HEK293 (cell line): ENCODE measurements at regions of chr1 and their contacts with region 1.

Region 1: DNA sequence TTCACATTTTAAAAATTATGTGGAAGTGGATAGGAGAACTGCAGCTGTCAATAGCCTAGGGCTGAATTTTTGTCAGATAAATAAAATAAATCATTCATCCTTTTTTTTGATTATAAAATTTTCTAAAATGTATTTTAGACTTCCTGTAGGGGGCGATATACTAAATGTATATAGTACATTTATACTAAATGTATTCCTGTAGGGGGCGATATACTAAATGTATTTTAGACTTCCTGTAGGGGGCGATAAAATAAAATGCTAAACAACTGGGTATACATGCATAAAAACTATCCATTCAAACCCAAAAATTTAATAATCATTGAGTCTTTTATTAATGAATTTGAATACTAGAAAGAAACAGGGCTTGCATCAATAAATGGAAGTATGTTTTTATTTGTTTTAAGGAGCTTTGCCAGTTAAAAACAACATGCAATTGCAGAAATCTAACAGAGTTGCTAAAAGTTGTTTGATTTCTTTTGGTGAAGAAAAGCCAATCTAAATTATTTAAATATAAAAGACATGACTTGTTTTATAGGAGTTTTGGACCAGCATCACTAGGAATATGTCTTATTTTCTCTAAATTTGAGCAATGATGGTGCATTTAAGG is 31.4 kb downstream of the CLCA1 start:
- H3K4me3 ChIP-seq: no peak overlapping the region
- H3K27ac ChIP-seq: no peak overlapping the region
- H3K4me1 ChIP-seq: no peaks in the 10 kb centered on the region
- CTCF ChIP-seq: no peak

Region 2: GRCh38 chr1:86380257-86380861 is 119.7 kb before region 1 on chr1:
- CTCF ChIA-PET with region 1: interaction called, 29 read pairs
- POLR2A ChIA-PET with region 1: no interaction called
- H3K4me3 ChIP-seq: no peak overlapping the region
- H3K27ac ChIP-seq: no peak overlapping the region
- H3K4me1 ChIP-seq: no peaks in the 10 kb centered on the region
- CTCF ChIP-seq: 0 out of 2 replicates have a peak, but pooled peaks have one; percentile 20

Region 3: DNA sequence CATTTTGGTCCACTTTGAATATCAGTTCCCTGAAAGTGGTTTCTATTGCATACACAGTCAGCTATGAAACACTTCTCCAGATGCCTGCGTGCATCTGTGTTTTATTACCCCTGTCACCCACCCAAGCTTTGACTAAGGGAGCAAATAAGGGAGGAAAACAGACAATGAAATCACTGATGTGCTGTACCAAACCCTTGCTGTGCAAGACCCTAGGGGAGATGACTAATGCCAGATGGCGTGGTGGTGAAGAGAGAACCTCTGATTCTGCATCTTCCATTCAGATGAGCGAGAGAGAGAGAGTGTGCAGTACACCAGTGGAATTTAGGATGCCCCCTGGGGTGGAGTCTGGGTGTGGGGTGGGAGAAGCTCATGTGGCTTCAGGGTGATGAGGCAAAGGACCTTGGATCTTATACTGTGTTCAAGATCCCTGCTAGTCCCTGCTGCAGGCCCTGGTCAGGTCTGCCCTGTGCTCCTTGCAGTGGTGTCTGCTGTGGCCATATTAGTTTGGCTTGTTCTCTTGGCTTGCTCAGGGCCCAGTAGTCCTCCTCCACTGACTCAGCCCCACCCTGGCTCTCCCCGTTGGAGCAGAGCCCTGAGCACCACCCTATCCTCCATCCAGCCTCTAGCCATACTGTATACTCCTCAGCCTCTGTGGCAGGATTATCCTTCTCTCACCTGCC is 12.8 kb before region 1 on chr1:
- CTCF ChIA-PET with region 1: interaction called, 35 read pairs
- POLR2A ChIA-PET with region 1: no interaction called
- H3K4me3 ChIP-seq: no peak overlapping the region
- H3K27ac ChIP-seq: no peak overlapping the region
- H3K4me1 ChIP-seq: no peaks in the 10 kb centered on the region
- CTCF ChIP-seq: no peak

Region 4: DNA sequence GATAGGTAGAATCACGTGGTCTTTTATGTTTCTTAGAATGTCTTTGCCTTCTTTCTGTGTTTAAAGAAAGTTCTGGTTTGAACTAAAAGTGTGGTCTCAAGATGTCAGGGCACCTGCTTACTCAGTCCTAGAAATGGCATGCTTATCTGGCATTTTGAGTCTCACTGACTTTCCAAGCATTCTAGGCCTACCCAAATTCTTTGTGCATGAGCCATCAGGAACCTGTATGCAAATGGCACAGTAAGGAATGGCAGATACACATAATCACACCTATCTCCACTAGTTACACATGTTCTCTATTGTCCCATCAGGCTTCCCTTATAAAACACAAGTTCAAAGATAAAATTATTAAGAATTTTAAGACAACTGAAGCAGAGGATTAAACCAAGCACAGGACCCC is 17.2 kb after region 1 on chr1:
- CTCF ChIA-PET with region 1: interaction called, 21 read pairs
- POLR2A ChIA-PET with region 1: no interaction called
- H3K4me3 ChIP-seq: no peak overlapping the region
- H3K27ac ChIP-seq: no peak overlapping the region
- H3K4me1 ChIP-seq: no peaks in the 10 kb centered on the region
- CTCF ChIP-seq: no peak

Region 5: DNA sequence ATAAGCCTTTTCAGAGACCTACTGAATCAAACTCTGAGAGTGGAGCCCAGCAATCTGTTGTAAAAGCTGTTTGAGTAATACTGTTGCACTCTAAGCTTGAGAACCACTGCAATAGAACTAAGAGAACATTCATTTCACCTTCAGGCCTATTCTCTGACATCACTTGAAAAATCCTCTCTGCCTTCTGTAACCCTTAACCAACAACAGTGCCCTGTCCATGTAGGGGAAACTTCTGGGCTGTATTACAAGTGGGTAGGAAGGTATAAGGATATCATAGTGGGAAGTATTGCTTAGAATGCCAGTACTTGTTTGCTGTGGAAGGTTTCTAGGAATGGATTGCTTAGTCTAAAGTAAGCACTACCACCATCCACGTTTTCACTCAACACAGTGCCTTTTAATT is 247.2 kb after region 1 on chr1:
- CTCF ChIA-PET with region 1: interaction called, 10 read pairs
- POLR2A ChIA-PET with region 1: no interaction called
- H3K4me3 ChIP-seq: no peak overlapping the region
- H3K27ac ChIP-seq: no peak overlapping the region
- H3K4me1 ChIP-seq: peaks cover 7% of the 10 kb centered on the region; the same call in 1 of the 2 replicates
- CTCF ChIP-seq: no peak